Gastrocnemius medialis (tissue), 4 donors: ENCODE measurements at regions of chrX and their contacts with region 1.

Region 1: DNA sequence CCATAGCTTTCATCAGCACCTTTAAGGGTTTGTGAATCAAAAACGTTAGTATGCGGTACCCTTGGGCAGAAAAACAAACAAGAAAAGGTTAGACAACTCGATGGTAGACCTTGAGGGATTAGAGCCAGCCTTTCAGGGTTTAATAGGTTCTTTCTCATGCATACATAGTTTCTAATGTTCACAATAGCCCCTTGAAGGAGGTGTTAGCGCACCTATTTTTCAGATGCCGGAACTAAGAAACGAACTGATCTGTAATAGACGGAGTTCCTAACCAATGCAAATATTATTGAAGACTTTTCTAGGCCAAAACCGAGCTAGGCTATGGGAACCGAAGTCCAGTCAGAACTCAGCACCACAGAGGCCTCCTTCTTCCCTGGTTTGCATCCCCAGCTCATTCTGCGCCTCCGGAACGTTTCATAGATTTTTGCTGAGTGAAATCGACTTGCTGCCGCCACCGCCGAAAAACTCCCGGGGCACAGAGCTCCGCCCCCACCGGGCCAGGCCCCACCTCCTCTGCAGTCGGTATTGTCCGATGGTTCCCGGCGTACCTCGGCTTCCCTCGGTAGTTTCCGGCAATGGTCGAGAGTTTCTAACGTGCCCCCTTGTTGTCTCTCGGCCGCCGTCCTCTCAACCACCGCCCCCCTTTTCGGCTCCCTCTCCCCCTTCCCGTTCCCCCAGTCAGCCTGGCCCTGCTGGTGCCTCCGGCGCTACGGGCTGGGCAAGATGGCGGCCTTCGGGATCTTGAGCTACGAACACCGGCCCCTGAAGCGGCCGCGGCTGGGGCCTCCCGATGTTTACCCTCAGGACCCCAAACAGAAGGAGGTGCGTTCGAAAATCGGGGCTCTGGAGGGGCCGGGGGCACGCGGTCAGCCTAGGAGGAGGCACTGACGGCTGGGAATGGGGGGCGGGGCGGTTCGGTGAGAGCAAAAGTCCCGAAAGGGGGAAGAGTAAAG is at the start of gene MED12:
- DNase-seq: peak; percentile 66 to 77
- ATAC-seq: peak; percentile 96 to 97
- H3K4me3 ChIP-seq: peak within 1 kb of the TSS; percentile 70 to 80 (median 75)
- H3K27ac ChIP-seq: peak within 1 kb of the TSS; percentile 87 to 92 (median 90)
- H3K4me1 ChIP-seq: no peaks in the 10 kb centered on the region
- H3K27me3 ChIP-seq: no peaks in the 10 kb centered on the region
- CTCF ChIP-seq: no peak
- POLR2A ChIP-seq: peak; percentile 17 to 29
- total RNA-seq, gene MED12: 11.8 to 25.5 (median 17.4) TPM

Region 2: GRCh38 chrX:71095543-71095911 is 22.8 kb before region 1 on chrX and contains the start of gene FOXO4:
- in situ Hi-C with region 1: no loop called
- intact Hi-C with region 1: loop called (anchors 1 kb)
- DNase-seq: peak; percentile 85 to 86
- ATAC-seq: peak; percentile 95 to 96
- H3K4me3 ChIP-seq: peak within 1 kb of the TSS; percentile 62 to 71 (median 66)
- H3K27ac ChIP-seq: peak within 1 kb of the TSS; percentile 74 to 87 (median 84)
- H3K4me1 ChIP-seq: peaks cover 9% of the 10 kb centered on the region in 2 donors
- H3K27me3 ChIP-seq: no peaks in the 10 kb centered on the region
- CTCF ChIP-seq: no peak
- POLR2A ChIP-seq: peak; percentile 11 to 38
- total RNA-seq, gene FOXO4: 35.2 to 48.0 (median 41.8) TPM

Region 3: GRCh38 chrX:71139046-71139756 is 20.9 kb after region 1 on chrX:
- in situ Hi-C with region 1: no loop called
- intact Hi-C with region 1: no loop called
- DNase-seq: no peak
- ATAC-seq: no peak
- H3K4me3 ChIP-seq: no peak overlapping the region
- H3K27ac ChIP-seq: no peak overlapping the region
- H3K4me1 ChIP-seq: no peaks in the 10 kb centered on the region
- H3K27me3 ChIP-seq: no peaks in the 10 kb centered on the region
- CTCF ChIP-seq: no peak
- POLR2A ChIP-seq: no peak